Breast epithelium (tissue), 4 donors: ENCODE measurements at regions of chr4 and their contacts with region 1.

Region 1: GRCh38 chr4:66814277-66814676 is 731.0 kb downstream of the CENPC start:
- DNase-seq: no peak
- H3K4me3 ChIP-seq: no peak overlapping the region
- H3K27ac ChIP-seq: no peak overlapping the region
- H3K4me1 ChIP-seq: no peaks in the 10 kb centered on the region
- H3K27me3 ChIP-seq: no peaks in the 10 kb centered on the region
- CTCF ChIP-seq: no peak
- POLR2A ChIP-seq: no peak

Region 2: GRCh38 chr4:66863481-66863880 is 49.2 kb after region 1 on chr4:
- intact Hi-C with region 1: no loop called
- DNase-seq: no peak
- H3K4me3 ChIP-seq: no peak overlapping the region
- H3K27ac ChIP-seq: no peak overlapping the region
- H3K4me1 ChIP-seq: no peaks in the 10 kb centered on the region
- H3K27me3 ChIP-seq: no peaks in the 10 kb centered on the region
- CTCF ChIP-seq: no peak
- POLR2A ChIP-seq: no peak

Region 3: DNA sequence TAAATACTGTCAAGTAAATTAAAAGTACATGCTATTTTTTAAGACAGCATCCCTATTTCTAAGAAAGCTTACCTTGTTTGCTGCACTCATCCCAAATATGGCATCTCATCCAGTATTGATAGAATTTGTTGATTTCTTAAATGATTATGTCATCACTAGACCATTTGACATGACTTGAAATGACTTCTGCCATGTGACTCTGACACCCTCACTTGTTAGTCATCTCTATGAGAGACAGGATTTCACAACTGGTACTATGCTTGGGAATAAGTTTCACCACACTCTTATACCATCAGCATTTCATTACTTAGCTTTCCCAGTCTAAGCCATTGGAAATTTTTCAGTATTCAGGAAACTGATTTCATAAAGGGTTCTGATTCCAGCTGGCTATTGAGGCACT is 1260.1 kb after region 1 on chr4:
- intact Hi-C with region 1: loop called (anchors 10 kb)
- DNase-seq: no peak
- H3K4me3 ChIP-seq: no peak overlapping the region
- H3K27ac ChIP-seq: no peak overlapping the region
- H3K4me1 ChIP-seq: no peaks in the 10 kb centered on the region
- H3K27me3 ChIP-seq: no peaks in the 10 kb centered on the region
- CTCF ChIP-seq: no peak
- POLR2A ChIP-seq: no peak

Region 4: GRCh38 chr4:68401269-68401668 is 1587.0 kb after region 1 on chr4:
- intact Hi-C with region 1: no loop called
- DNase-seq: no peak
- H3K4me3 ChIP-seq: no peak overlapping the region
- H3K27ac ChIP-seq: no peak overlapping the region
- H3K4me1 ChIP-seq: no peaks in the 10 kb centered on the region
- H3K27me3 ChIP-seq: no peaks in the 10 kb centered on the region
- CTCF ChIP-seq: no peak
- POLR2A ChIP-seq: no peak